Right ventricle myocardium inferior (tissue), 1 donor: ENCODE measurements at regions of chr2 and their contacts with region 1.

Region 1: DNA sequence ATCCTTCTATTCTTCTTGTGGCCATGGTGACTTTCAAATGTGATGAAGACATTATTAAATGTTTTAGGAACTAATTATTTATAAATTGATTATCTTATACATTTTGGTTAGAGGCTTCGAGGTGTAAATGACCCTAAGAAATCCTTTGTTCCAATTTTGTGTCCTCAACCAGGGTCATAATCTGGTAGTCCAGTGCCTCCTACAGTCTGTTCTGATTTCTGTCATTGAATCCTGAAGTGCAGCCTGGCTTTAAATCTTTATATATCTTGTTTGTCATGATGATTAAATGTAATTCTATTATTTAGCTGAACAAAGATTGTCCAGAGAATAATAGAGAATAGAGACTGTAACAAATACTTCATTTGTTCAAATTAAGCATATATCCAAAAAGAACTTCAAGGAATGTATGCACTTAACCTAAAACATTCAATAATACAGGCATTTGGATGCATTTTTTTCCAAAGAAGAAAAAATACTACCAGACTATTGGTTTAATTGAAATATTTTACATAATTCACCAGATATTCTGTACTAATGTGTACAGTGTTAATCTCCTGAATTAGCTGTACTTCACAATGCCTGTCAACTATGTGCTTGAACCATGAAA is 89.8 kb downstream of the PRPF40A start:
- DNase-seq: no peak
- ATAC-seq: no peak

Region 2: DNA sequence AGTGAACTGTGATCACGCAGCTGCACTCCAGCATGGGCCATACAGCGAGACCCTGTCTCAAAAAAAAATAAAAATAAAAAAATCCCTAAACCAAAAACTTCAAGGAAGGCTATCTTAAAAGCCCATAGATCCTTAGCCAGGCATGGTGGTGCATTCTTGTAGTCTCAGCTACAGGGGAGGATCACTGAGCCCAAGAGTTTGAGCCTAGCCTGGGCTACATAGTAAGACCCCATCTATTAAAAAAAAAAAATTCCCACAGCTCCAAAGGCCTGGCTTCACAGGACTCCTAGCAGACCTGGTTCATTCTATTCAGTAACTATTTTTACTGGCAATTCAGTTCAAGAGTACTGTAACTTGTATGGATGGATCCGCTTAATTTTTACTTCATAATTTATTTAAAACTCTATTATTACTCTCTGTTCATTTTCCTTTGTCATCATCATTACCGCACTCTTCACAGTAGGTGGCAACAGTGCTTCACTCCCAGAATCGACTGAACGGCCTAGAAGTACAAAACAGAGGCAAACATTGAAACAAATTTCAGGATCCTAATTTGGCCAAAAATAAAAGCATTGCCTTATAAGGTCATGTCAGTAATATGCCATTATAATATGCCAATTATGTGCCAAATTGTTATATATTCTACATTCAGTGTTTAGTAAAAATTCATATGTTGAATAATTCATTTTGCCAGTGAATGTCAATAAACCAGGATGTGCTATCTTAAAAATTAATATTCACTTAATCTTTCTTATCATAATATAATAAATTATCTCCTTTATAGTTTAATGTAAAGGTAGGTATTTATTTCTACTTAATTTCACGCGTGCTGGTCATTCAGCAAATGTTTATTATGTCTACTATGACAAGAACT is 437.6 kb before region 1 on chr2:
- intact Hi-C with region 1: loop called (anchors 2 kb)
- DNase-seq: no peak
- ATAC-seq: peak; percentile 72

Region 3: DNA sequence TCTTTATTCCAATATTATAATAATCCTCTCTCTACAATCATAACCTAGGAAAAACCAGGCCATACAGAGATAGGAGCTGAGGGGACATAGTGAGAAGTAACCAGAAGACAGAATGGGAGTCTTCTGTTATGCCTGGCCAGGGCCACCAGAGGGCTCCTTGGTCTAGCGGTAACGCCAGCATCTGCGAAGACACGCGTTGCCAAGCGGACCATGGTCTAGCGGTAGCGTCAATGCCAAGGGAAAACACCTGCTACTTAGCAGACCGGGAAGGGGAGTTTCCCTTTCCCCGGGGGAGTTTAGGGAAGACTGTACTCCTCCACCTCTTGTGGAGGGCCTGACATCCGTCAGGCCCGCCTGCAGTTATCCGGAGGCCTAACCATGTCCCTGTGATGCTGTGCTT is 127.6 kb after region 1 on chr2:
- intact Hi-C with region 1: no loop called
- DNase-seq: no peak
- ATAC-seq: no peak